IMR-90 (cell line): ENCODE measurements at regions of chr5 and their contacts with region 1.

Region 1: GRCh38 chr5:157761690-157762621 is 18.4 kb downstream of the LSM11 start:
- DNase-seq: peak; percentile 72
- ATAC-seq: peak; percentile 99
- H3K4me3 ChIP-seq: no peak overlapping the region
- H3K27ac ChIP-seq: no peak overlapping the region
- H3K4me1 ChIP-seq: no peaks in the 10 kb centered on the region
- H3K27me3 ChIP-seq: no peaks in the 10 kb centered on the region
- CTCF ChIP-seq: peak; percentile 81
- POLR2A ChIP-seq: no peak
- RAD21 ChIP-seq: peak; percentile 73

Region 2: GRCh38 chr5:157778121-157778805 is 16.3 kb after region 1 on chr5:
- CTCF ChIA-PET with region 1: interaction called, 10 read pairs
- POLR2A ChIA-PET with region 1: no interaction called
- dilution Hi-C with region 1: no loop called
- in situ Hi-C with region 1: no loop called
- intact Hi-C with region 1: no loop called
- DNase-seq: peak; percentile 6
- ATAC-seq: no peak
- H3K4me3 ChIP-seq: no peak overlapping the region
- H3K27ac ChIP-seq: no peak overlapping the region
- H3K4me1 ChIP-seq: no peaks in the 10 kb centered on the region
- H3K27me3 ChIP-seq: no peaks in the 10 kb centered on the region; the same call in 1 of the 2 replicates
- CTCF ChIP-seq: no peak
- POLR2A ChIP-seq: no peak
- RAD21 ChIP-seq: no peak

Region 3: DNA sequence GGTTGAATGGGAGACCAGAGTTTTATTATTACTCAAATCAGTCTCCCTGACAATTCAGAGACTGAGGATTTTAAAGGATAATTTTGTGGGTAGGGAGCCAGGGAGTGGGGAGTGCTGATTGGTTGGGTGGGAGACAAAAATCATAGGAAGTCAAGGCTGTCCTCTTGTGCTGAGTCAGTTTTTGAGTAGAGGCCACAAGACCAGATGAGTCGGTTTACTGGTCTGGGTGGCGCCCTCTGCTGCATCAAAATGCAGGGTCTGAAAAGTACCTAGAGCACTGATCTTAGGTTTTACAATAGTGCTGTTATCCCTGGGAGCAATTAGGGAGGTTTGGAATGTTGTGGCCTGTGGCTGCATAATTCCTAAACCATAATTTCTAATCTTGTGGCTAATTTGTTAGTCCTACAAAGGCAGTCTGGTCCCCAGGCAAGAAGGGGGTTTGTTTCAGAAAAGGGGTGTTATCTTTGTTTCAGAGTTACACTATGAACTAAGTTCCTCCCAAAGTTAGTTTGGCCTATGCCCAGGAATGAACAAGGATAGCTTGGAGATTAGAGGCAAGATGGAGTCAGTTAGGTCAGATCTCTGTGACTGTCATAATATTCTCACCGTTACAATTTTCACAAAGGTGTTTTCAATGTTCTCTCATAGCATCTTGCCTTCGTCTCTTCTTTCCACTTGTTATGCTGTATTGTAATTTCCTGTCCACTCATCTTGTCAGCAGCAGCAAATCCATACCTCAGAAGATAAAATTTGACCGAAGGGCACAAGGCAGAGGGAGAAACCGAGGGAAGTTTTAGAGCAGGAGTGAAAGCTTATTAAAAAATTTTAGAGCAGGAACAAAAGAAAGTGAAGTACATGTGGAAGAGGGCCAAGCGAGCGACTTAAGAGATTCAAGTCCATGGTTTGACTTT is 156.2 kb after region 1 on chr5:
- CTCF ChIA-PET with region 1: no interaction called
- POLR2A ChIA-PET with region 1: no interaction called
- dilution Hi-C with region 1: no loop called
- in situ Hi-C with region 1: no loop called
- intact Hi-C with region 1: loop called (anchors 5 kb)
- DNase-seq: peak; percentile 75
- ATAC-seq: peak; percentile 86
- H3K4me3 ChIP-seq: no peak overlapping the region
- H3K27ac ChIP-seq: no peak overlapping the region
- H3K4me1 ChIP-seq: no peaks in the 10 kb centered on the region
- H3K27me3 ChIP-seq: peaks cover 8% of the 10 kb centered on the region
- CTCF ChIP-seq: peak; percentile 61
- POLR2A ChIP-seq: no peak
- RAD21 ChIP-seq: peak; percentile 60

Region 4: DNA sequence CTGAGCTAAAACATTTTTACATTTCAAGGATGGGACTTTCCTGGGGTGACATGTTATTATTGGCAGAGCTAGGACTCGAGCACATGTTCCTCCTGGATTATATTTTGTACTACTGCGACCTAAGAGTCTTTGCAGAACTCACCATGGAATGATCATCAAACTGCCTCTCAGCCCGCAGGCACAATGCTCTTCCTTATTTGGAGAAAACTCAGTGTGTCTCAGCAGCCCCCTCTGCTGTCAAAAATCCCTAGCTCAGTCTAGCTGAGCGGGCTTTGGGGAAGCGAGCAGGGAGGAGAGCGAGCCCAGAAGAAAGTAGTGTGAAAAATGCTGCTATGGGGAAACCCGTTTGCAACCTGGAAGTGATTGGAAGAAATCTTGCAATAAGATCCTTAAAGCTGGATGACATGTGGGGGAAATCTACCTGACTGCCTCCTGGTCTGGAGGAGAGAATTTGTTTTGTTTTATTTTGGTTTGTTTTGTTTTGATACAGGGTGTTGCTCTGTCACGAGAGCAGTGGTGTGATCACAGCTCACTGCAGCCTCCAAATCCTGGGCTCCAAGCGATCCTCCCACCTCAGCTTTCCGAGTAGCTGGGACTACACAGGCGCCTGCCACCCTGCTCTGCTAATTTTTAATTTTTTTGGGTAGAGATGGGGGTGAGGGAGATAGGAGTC is 186.9 kb after region 1 on chr5:
- CTCF ChIA-PET with region 1: interaction called, 3 read pairs
- POLR2A ChIA-PET with region 1: no interaction called
- dilution Hi-C with region 1: no loop called
- in situ Hi-C with region 1: no loop called
- intact Hi-C with region 1: loop called (anchors 1 kb)
- DNase-seq: peak; percentile 90
- ATAC-seq: peak; percentile 100
- H3K4me3 ChIP-seq: no peak overlapping the region
- H3K27ac ChIP-seq: no peak overlapping the region
- H3K4me1 ChIP-seq: no peaks in the 10 kb centered on the region
- H3K27me3 ChIP-seq: no peaks in the 10 kb centered on the region
- CTCF ChIP-seq: peak; percentile 93
- POLR2A ChIP-seq: no peak
- RAD21 ChIP-seq: peak; percentile 63

Region 5: GRCh38 chr5:157994906-157995519 is 233.1 kb after region 1 on chr5:
- CTCF ChIA-PET with region 1: interaction called, 4 read pairs
- POLR2A ChIA-PET with region 1: no interaction called
- dilution Hi-C with region 1: no loop called
- in situ Hi-C with region 1: no loop called
- intact Hi-C with region 1: loop called (anchors 1 kb)
- DNase-seq: peak; percentile 54
- ATAC-seq: peak; percentile 100
- H3K4me3 ChIP-seq: no peak overlapping the region
- H3K27ac ChIP-seq: no peak overlapping the region
- H3K4me1 ChIP-seq: no peaks in the 10 kb centered on the region
- H3K27me3 ChIP-seq: no peaks in the 10 kb centered on the region
- CTCF ChIP-seq: peak; percentile 69
- POLR2A ChIP-seq: no peak
- RAD21 ChIP-seq: peak; percentile 73

Region 6: GRCh38 chr5:159133041-159133741 is 1371.2 kb after region 1 on chr5:
- CTCF ChIA-PET with region 1: interaction called, 3 read pairs
- POLR2A ChIA-PET with region 1: no interaction called
- dilution Hi-C with region 1: no loop called
- in situ Hi-C with region 1: no loop called
- intact Hi-C with region 1: loop called (anchors 5 kb)
- DNase-seq: peak; percentile 67
- ATAC-seq: peak; percentile 78
- H3K4me3 ChIP-seq: no peak overlapping the region
- H3K27ac ChIP-seq: no peak overlapping the region
- H3K4me1 ChIP-seq: peaks cover 2% of the 10 kb centered on the region
- H3K27me3 ChIP-seq: peaks cover 10% of the 10 kb centered on the region
- CTCF ChIP-seq: peak; percentile 90
- POLR2A ChIP-seq: no peak
- RAD21 ChIP-seq: peak; percentile 86